PC-9 (cell line): ENCODE measurements at regions of chr1 and their contacts with region 1.

Region 1: DNA sequence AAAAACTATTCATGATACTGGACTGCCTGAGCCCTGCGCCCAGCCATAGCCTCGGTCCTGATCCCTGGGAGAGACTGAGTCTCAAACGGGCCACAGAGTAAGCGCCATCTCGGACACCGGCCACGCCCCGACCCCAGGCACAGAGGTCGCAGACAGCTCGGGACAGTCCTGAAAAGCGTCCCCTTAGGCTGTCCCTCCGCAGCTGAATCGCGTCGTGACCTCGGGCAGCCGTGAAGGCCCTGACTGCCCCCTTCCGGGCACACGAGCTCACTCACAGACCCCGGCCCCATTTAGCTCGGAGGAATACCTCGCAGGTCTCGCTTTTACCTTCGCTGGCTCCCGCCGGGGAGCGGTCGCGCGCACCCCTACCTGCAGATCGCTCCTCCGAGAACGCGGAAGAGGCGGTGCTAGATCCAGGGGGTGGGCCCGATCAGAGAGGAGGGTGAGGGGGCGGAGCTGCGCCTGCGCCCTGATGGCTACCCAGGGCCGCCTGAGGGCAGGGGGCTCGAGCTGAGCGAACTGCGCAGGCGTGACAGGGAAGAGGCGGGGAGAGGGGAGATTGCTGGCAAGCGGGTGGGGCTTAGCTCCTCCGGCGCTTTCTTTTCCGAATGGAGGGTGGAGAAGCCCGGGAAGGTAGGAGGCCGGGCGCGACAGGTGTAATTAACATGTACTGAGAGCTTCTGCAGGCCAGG is at the start of gene MKNK1:
- DNase-seq: peak; percentile 85 to 100
- H3K4me3 ChIP-seq: peak within 1 kb of the TSS; percentile 95
- H3K27ac ChIP-seq: peak within 1 kb of the TSS; percentile 37
- H3K4me1 ChIP-seq: peaks cover 29% of the 10 kb centered on the region
- H3K27me3 ChIP-seq: no peaks in the 10 kb centered on the region
- CTCF ChIP-seq: no peak
- total RNA-seq, gene MKNK1: 103 and 112 TPM in 2 replicates

Region 2: DNA sequence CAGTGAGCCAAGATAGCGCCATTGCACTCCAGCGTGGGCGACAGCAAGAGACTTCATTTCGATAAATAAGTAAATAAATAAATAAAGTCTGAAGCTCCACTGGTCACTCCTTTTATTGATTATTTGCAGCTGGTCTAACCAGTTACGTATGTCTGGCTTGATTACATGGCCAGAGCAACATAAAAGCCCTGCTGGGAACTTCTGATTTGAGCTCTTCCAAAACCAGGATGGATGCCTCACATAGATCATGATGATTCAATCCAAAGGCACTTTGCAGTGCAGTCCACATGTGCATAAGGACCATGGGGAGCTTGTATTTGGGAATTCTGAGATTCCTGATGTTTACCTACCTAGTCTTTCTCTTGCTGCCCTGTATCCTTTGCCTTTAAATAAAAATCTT is 239.4 kb before region 1 on chr1:
- CTCF ChIA-PET with region 1: no interaction called
- POLR2A ChIA-PET with region 1: no interaction called
- intact Hi-C with region 1: no loop called
- DNase-seq: no peak
- H3K4me3 ChIP-seq: no peak overlapping the region
- H3K27ac ChIP-seq: no peak overlapping the region
- H3K4me1 ChIP-seq: no peaks in the 10 kb centered on the region
- H3K27me3 ChIP-seq: no peaks in the 10 kb centered on the region
- CTCF ChIP-seq: no peak

Region 3: DNA sequence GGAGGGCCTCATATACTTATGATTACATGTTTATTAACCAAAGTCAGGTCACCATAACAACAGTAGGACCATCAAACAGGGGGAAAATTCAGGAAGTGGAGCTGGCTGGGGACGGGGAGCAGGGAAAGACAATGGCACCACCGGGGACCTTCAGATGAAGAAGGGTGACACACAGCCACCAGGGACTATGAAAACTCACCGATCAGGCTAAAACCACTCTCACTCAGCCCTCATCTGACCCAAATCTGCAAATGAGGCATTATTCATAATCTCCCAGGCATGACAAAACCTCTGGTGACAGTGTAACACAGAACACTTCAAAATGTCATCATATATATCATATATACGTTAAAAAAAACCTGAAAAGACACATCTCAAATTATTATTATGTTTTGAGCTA is 11.2 kb before region 1 on chr1:
- CTCF ChIA-PET with region 1: no interaction called
- POLR2A ChIA-PET with region 1: no interaction called
- intact Hi-C with region 1: no loop called
- DNase-seq: no peak
- H3K4me3 ChIP-seq: no peak overlapping the region
- H3K27ac ChIP-seq: no peak overlapping the region
- H3K4me1 ChIP-seq: no peaks in the 10 kb centered on the region
- H3K27me3 ChIP-seq: no peaks in the 10 kb centered on the region
- CTCF ChIP-seq: no peak

Region 4: GRCh38 chr1:46622344-46622743 is 18.3 kb after region 1 on chr1:
- CTCF ChIA-PET with region 1: no interaction called
- POLR2A ChIA-PET with region 1: interaction called, 28 read pairs
- intact Hi-C with region 1: no loop called
- DNase-seq: peak in 1 of 2 experiments; percentile 46
- H3K4me3 ChIP-seq: no peak overlapping the region
- H3K27ac ChIP-seq: no peak overlapping the region
- H3K4me1 ChIP-seq: peaks cover 20% of the 10 kb centered on the region
- H3K27me3 ChIP-seq: no peaks in the 10 kb centered on the region
- CTCF ChIP-seq: peak; percentile 65

Region 5: DNA sequence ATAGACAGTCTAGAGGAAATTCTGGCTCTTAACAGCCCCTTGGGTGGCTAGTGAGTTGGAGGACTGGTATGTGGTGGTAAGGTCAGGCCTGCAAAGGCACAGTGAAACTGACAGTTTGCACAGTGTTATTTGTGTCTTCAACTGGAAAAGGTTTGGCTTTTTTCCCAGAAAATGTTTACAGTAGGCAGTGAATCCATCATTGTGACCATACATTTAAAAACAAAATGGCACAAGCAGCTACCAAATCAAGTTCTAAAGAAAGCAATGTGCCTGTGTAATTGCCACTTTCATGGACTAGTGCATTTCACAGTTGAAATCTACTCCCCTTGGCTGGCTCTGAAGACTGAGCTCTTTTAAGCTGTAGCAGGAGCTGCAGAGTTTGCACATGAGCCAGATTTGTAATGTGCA is 39.4 kb after region 1 on chr1:
- CTCF ChIA-PET with region 1: no interaction called
- POLR2A ChIA-PET with region 1: interaction called, 8 read pairs
- intact Hi-C with region 1: loop called (anchors 2 kb)
- DNase-seq: peak; percentile 55 to 95
- H3K4me3 ChIP-seq: no peak overlapping the region
- H3K27ac ChIP-seq: peak overlapping the region; percentile 62
- H3K4me1 ChIP-seq: peaks cover 23% of the 10 kb centered on the region
- H3K27me3 ChIP-seq: no peaks in the 10 kb centered on the region
- CTCF ChIP-seq: no peak

Region 6: DNA sequence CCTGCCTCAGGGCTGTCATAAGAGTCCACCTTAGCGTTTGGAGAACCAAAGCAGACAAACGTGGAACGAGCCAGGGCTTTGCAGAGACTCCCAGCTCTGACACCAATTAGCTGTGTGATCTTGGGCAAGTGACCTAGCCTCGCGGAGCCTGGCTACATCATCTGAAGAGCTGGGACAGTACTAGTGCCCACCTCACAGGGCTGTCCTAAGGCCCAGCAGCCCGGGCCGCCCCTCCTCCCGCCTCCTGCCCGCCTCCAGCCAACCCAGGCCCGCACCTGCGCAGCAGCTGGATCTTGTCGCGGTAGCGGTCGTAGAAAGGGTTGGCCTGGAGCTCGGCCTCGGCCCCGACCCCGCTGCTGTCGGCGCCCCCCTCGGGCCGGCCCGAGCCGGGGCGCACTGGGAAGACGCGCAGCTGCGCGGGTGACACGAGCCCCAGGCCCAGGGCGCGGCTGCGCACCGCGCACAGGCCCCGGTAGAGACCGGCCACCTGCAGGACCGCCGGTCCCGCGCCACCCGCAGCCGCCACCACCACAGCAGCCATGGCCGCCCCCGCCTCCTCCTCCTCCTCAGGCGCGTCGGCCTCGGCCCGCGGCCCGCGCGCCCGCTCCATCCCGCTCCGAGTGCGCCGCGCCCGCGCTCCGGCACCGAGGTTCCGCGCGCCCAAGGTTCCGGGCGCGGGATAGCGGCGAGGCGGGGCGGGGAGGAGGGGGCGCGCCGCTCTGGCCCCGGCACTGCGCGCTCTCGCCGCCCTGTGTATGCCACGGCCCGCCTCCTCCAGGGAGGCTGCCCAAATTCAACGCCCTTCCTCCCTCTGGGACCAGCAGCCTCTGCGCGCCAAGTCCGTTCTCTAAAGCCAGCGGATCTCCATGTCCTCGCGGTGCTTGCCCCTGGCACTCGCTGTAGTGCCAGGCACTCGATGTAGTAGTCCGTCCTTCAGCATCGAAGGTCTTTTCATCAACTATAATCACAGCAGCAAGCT is 64.1 kb after region 1 on chr1 and contains the start of gene ATPAF1:
- CTCF ChIA-PET with region 1: interaction called, 9 read pairs
- POLR2A ChIA-PET with region 1: interaction called, 3 read pairs
- intact Hi-C with region 1: loop called (anchors 5 kb)
- DNase-seq: peak in 1 of 2 experiments; percentile 60
- H3K4me3 ChIP-seq: peak within 1 kb of the TSS; percentile 69
- H3K27ac ChIP-seq: no peak within 1 kb of the TSS
- H3K4me1 ChIP-seq: peaks cover 10% of the 10 kb centered on the region; the same call in 1 of the 2 replicates
- H3K27me3 ChIP-seq: no peaks in the 10 kb centered on the region
- CTCF ChIP-seq: no peak
- total RNA-seq, gene ATPAF1: 47.0 and 50.3 TPM in 2 replicates

Region 7: GRCh38 chr1:46718727-46719622 is 115.0 kb after region 1 on chr1 and contains the start of gene EFCAB14:
- CTCF ChIA-PET with region 1: interaction called, 6 read pairs
- POLR2A ChIA-PET with region 1: interaction called, 4 read pairs
- intact Hi-C with region 1: loop called (anchors 2 kb)
- DNase-seq: peak; percentile 91 to 100
- H3K4me3 ChIP-seq: peak within 1 kb of the TSS; percentile 82
- H3K27ac ChIP-seq: peak within 1 kb of the TSS; percentile 88
- H3K4me1 ChIP-seq: peaks cover 53% of the 10 kb centered on the region
- H3K27me3 ChIP-seq: no peaks in the 10 kb centered on the region
- CTCF ChIP-seq: no peak
- total RNA-seq, gene EFCAB14: 71.1 and 95.4 TPM in 2 replicates